ENCODE measurements at regions of chr16 and their contacts with region 1.

Region 1: DNA sequence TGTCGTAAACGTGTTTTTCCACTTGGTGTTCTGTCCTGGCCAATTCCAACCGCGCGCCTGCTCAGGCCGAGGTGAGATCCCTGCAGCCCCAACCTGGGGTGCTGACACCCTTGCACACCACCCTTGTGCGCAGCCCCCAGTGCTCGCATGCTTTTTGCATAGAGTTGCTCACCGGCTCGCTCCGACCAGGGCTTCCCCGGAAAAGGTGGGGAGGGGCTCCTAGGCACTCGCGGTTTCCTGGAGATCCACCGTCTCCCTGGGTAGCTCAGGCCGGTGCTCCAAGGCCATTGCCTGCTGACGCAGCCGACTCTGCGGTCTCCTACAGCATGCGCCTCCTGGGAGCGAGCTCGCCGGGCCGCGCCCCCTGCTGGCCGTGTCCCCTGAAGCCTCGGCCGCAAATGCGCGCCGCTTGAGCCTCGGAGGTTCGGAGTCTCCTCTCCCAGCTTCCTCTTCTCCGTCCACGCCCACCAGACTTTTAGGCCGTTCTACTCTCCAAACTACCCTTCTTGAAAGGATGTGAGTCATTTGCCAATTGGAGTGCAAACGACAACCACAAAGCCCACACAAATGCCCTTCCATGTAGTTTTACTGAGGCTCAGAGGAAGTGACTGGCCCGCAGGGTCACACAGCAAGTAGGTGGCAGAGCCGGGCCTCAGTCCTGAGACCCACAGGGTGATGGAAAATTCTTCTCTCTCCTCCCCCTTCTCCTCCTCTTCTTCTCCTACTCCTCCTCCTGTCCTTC is 7.2 kb upstream of the PDP2 start:
- DNase-seq: peak; percentile 94
- H3K4me3 ChIP-seq: peak overlapping the region; percentile 57
- H3K27ac ChIP-seq: peak overlapping the region; percentile 82
- H3K27me3 ChIP-seq: no peaks in the 10 kb centered on the region
- CTCF ChIP-seq: peak; percentile 94

Region 2: DNA sequence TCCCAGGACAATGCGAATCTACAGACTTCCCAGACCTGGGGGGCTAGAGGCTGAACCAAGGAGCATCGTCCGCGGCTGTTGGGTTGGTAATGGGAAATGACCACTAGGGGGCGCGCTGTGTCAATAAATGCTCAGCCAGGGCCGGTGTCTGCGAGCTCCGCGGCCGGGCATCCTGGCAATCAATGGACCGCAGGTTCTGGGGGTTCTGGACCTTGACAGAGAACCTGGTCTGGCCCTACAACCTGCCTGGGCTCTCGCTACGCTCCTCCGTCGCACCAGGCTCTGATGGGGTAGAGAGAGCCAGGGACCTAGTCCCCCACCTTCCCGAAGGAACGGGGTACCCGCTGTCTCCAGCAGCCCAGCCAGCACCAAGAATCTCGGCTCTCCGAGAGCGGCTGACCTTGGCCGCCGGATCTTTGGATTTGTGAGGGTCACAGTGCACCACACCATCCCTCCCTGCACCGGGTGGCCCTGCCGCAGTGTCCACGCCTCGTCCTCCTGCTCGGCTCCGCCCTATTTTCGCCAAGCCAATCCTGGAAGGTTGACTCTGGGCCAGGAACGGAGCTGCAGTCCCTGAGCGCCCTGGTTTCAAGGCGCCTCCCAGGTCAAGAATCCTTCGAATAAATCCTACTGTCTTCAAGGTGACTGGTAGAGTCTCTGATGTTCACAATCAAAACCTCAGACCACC is 466.4 kb before region 1 on chr16:
- CTCF ChIA-PET with region 1: interaction called, 18 read pairs
- POLR2A ChIA-PET with region 1: interaction called, 3 read pairs
- DNase-seq: no peak
- H3K4me3 ChIP-seq: peak overlapping the region; percentile 74
- H3K27ac ChIP-seq: peak overlapping the region; percentile 12
- H3K27me3 ChIP-seq: peaks cover 26% of the 10 kb centered on the region
- CTCF ChIP-seq: peak; percentile 85

Region 3: GRCh38 chr16:66660422-66661209 is 212.5 kb before region 1 on chr16:
- CTCF ChIA-PET with region 1: interaction called, 24 read pairs
- POLR2A ChIA-PET with region 1: no interaction called
- DNase-seq: peak; percentile 41
- H3K4me3 ChIP-seq: peak overlapping the region; percentile 5; the same call in 1 of the 2 replicates
- H3K27ac ChIP-seq: peak overlapping the region; percentile 79
- H3K27me3 ChIP-seq: no peaks in the 10 kb centered on the region
- CTCF ChIP-seq: peak; percentile 49

Region 4: GRCh38 chr16:66830422-66831404 is 42.4 kb before region 1 on chr16 and contains the start of gene NAE1:
- CTCF ChIA-PET with region 1: interaction called, 161 read pairs
- POLR2A ChIA-PET with region 1: interaction called, 11 read pairs
- DNase-seq: peak; percentile 53
- H3K4me3 ChIP-seq: peak within 1 kb of the TSS; percentile 68
- H3K27ac ChIP-seq: no peak within 1 kb of the TSS
- H3K27me3 ChIP-seq: peaks cover 3% of the 10 kb centered on the region
- CTCF ChIP-seq: peak; percentile 89
- polyA plus RNA-seq, gene NAE1: 31.3 and 49.8 TPM in 2 replicates

Region 5: GRCh38 chr16:66858740-66859396 is 14.2 kb before region 1 on chr16:
- CTCF ChIA-PET with region 1: interaction called, 54 read pairs
- POLR2A ChIA-PET with region 1: no interaction called
- DNase-seq: no peak
- H3K4me3 ChIP-seq: no peak overlapping the region
- H3K27ac ChIP-seq: no peak overlapping the region
- H3K27me3 ChIP-seq: peaks cover 8% of the 10 kb centered on the region
- CTCF ChIP-seq: no peak

Region 6: GRCh38 chr16:67241008-67241900 is 368.1 kb after region 1 on chr16:
- CTCF ChIA-PET with region 1: interaction called, 12 read pairs
- POLR2A ChIA-PET with region 1: interaction called, 3 read pairs
- DNase-seq: peak; percentile 67
- H3K4me3 ChIP-seq: no peak overlapping the region
- H3K27ac ChIP-seq: peak overlapping the region; percentile 98
- H3K27me3 ChIP-seq: no peaks in the 10 kb centered on the region
- CTCF ChIP-seq: no peak